ENCODE measurements at regions of chrX and their contacts with region 1.

Region 1: DNA sequence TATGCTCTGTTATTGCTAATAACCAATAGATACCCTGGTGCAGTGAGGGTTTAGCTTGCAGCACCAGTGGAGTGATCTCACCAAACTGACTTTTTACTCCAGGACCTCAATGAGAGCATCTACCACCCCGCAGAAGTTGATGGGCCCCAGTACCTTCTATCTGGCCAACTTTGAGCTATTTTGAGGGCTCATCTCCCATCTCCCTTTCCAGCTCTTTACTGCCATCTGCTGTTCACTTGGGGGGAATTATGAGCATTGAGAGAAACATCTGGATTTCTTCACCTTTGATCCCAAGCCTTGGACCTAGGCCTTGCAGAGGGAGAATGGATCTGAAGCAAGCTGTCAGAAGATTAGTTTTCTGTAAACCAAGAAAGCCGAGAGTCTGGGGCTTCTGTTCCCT is 143.6 kb downstream of the TMEM164 start:
- DNase-seq: peak in 5 of 9 donors; percentile 17 to 45 (median 33)
- ATAC-seq: peak; percentile 61
- H3K4me3 ChIP-seq: no peak overlapping the region
- H3K4me3 Mint-ChIP-seq: no peak overlapping the region
- H3K27ac ChIP-seq: no peak overlapping the region
- H3K27ac Mint-ChIP-seq: no peak overlapping the region
- H3K4me1 ChIP-seq: peaks cover 0 to 4% of the 10 kb centered on the region in 2 donors
- H3K4me1 Mint-ChIP-seq: peaks cover 0 to 10% (median 5%) of the 10 kb centered on the region in 7 donors
- H3K27me3 ChIP-seq: no peaks in the 10 kb centered on the region
- H3K27me3 Mint-ChIP-seq: no peaks in the 10 kb centered on the region

Region 2: GRCh38 chrX:109911046-109911445 is 235.5 kb before region 1 on chrX:
- CTCF ChIA-PET with region 1: interaction called, 7 read pairs
- POLR2A ChIA-PET with region 1: interaction called, 5 read pairs
- intact Hi-C with region 1: loop called (anchors 2 to 10 kb)
- DNase-seq: no peak
- ATAC-seq: no peak
- H3K4me3 ChIP-seq: no peak overlapping the region
- H3K4me3 Mint-ChIP-seq: no peak overlapping the region
- H3K27ac ChIP-seq: no peak overlapping the region
- H3K27ac Mint-ChIP-seq: no peak overlapping the region
- H3K4me1 ChIP-seq: no peaks in the 10 kb centered on the region
- H3K4me1 Mint-ChIP-seq: no peaks in the 10 kb centered on the region
- H3K27me3 ChIP-seq: no peaks in the 10 kb centered on the region
- H3K27me3 Mint-ChIP-seq: peaks cover 0 to 9% (median 0%) of the 10 kb centered on the region in 5 donors

Region 3: DNA sequence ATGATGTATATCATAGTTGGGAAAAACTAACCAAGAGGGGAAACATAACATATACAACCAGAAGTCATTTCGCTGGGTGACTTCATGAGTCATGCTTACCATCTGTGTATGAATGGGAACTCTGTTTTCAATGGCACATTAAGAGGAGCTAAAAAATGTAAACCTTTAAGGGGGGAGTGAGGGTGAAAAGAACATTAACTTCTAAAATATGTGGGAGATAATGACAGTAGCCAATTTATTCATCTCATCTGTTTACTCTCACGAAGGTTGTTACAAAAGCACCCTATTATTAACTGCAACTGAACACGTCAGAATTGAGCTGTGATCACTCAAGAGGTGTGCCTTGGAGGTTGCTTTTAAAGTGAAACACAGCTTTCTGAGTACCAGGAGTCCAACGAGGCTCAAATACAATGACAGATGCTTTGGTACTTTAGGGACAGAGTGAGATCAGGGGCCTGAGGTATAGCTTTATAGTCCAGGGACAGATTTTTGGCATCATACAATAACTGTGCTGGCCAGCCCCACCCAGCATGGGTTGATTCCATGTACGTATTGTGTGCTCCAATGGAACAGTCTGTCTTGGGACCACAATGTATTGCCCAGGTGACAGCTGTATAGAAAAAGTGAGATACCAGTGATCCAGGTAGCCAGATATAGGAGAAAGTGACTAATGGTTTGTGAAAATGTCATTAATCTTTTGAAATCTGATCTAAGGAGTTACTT is 64.1 kb after region 1 on chrX:
- CTCF ChIA-PET with region 1: no interaction called
- POLR2A ChIA-PET with region 1: no interaction called
- intact Hi-C with region 1: no loop called
- DNase-seq: no peak
- ATAC-seq: no peak
- H3K4me3 ChIP-seq: no peak overlapping the region
- H3K4me3 Mint-ChIP-seq: no peak overlapping the region
- H3K27ac ChIP-seq: no peak overlapping the region
- H3K27ac Mint-ChIP-seq: no peak overlapping the region
- H3K4me1 ChIP-seq: no peaks in the 10 kb centered on the region
- H3K4me1 Mint-ChIP-seq: peaks cover 1 to 7% (median 3%) of the 10 kb centered on the region in 7 donors
- H3K27me3 ChIP-seq: no peaks in the 10 kb centered on the region
- H3K27me3 Mint-ChIP-seq: no peaks in the 10 kb centered on the region

Region 4: DNA sequence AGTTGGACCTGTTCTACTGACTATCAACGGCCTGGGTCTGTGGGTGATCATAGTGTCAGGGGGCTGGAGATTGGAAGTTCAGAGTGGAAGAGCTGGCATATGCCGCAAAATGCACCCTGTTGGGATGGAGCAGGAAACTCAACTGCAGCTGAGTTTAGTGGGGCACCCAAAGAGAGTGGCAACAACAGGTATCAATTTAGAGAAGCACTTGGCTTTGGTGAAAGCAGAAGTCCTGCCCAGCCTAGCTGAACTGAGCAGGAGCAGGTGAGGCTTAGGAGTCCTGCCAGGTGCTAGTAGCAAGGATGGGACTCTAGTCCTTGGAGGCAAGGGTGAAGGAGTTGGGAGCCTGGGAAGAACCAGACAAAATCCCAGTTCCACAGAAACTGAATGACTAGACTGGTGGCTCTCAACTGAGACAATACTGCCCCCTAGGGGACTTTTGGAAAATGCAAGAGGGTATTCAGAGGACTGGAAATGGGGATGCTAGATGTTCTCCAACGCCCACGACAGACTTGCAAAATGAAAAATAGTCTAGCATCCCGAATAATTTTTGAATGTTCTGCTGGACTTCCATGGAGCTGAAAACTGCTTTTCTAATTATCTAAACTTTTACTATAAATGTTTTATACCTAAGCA is 261.5 kb after region 1 on chrX:
- CTCF ChIA-PET with region 1: interaction called, 18 read pairs
- POLR2A ChIA-PET with region 1: interaction called, 3 read pairs
- intact Hi-C with region 1: loop called in 1 of 2 experiments (anchors 1 kb)
- DNase-seq: peak; percentile 7 to 67 (median 46)
- ATAC-seq: peak; percentile 71
- H3K4me3 ChIP-seq: no peak overlapping the region
- H3K4me3 Mint-ChIP-seq: no peak overlapping the region
- H3K27ac ChIP-seq: no peak overlapping the region
- H3K27ac Mint-ChIP-seq: no peak overlapping the region
- H3K4me1 ChIP-seq: no peaks in the 10 kb centered on the region
- H3K4me1 Mint-ChIP-seq: peaks cover 0 to 2% (median 0%) of the 10 kb centered on the region in 7 donors
- H3K27me3 ChIP-seq: no peaks in the 10 kb centered on the region
- H3K27me3 Mint-ChIP-seq: peaks cover 0 to 4% (median 0%) of the 10 kb centered on the region in 5 donors

Region 5: GRCh38 chrX:110412971-110413721 is 266.6 kb after region 1 on chrX:
- CTCF ChIA-PET with region 1: interaction called, 18 read pairs
- POLR2A ChIA-PET with region 1: interaction called, 3 read pairs
- intact Hi-C with region 1: loop called in 1 of 2 experiments (anchors 1 kb)
- DNase-seq: peak; percentile 25 to 66 (median 56)
- ATAC-seq: peak; percentile 91
- H3K4me3 ChIP-seq: no peak overlapping the region
- H3K4me3 Mint-ChIP-seq: no peak overlapping the region
- H3K27ac ChIP-seq: no peak overlapping the region
- H3K27ac Mint-ChIP-seq: peak overlapping the region in 1 of 9 donors; percentile 16
- H3K4me1 ChIP-seq: no peaks in the 10 kb centered on the region
- H3K4me1 Mint-ChIP-seq: peaks cover 0 to 6% (median 0%) of the 10 kb centered on the region in 7 donors
- H3K27me3 ChIP-seq: no peaks in the 10 kb centered on the region
- H3K27me3 Mint-ChIP-seq: peaks cover 0 to 4% (median 0%) of the 10 kb centered on the region in 5 donors

Region 6: DNA sequence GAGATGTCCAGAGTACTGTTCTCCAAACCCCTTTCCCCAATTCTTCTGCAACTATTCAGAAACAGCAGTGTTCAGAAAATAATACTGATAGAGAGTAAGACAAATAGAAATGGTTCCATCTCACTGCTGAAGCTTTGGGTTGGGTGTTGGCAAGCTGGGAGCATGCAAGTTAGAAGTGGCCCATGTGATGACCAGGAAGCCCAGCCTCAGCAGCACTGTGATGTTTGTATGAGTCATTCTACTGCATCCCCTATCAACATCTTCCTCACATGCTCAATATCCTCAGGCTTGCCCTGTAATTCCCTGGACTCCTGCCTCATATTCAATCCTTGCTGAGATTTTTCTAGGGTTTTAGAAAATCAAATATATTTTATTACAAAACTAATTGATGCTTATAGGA is 552.6 kb after region 1 on chrX:
- CTCF ChIA-PET with region 1: no interaction called
- POLR2A ChIA-PET with region 1: no interaction called
- intact Hi-C with region 1: no loop called
- DNase-seq: no peak
- ATAC-seq: no peak
- H3K4me3 ChIP-seq: no peak overlapping the region
- H3K4me3 Mint-ChIP-seq: no peak overlapping the region
- H3K27ac ChIP-seq: no peak overlapping the region
- H3K27ac Mint-ChIP-seq: no peak overlapping the region
- H3K4me1 ChIP-seq: no peaks in the 10 kb centered on the region
- H3K4me1 Mint-ChIP-seq: peaks cover 0 to 5% (median 0%) of the 10 kb centered on the region in 7 donors
- H3K27me3 ChIP-seq: no peaks in the 10 kb centered on the region
- H3K27me3 Mint-ChIP-seq: peaks cover 0 to 5% (median 0%) of the 10 kb centered on the region in 5 donors

Measured in naive thymus-derived CD4-positive, alpha-beta T cell (primary cell).